Heart left ventricle (tissue), 16 donors: ENCODE measurements at regions of chr2 and their contacts with region 1.

Region 1: DNA sequence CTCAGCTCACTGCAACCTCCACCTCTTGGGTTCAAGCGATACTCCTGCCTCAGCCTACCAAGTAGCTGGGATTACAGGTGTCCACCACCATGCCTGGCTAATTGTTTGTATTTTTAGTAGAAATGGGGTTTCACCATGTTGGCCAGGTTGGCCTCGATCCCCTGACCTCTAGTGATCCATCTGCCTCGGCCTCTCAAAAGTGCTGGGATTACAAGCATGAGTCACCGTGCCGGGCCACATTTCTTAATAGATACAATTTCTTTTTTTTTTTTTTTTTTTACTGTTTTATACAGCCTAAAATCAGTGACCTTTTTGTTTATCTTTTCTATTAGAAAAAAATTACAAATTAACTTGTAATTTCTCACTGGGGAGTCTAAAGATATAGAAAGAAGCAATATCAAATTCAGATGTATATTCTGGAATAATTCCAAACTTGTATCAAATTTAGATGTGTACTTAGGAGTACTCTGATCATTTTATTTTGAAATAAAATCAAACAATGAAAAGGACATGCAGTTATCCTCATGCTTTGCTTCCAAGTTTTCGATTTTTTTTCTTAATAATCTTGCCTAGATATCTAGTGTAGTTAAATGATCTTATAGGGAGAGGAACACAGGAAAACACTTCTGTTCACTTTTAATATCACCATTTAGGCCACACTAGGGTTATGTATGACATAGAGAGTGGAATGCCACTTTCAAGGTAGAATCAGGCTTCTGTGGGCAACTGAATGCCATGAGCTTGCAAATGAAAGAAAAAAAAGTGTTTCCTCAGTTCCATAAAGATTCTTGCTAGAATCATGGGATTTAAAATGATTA is 1089.3 kb downstream of the SUCLG1 start:
- DNase-seq: no peak
- ATAC-seq: no peak
- H3K4me3 ChIP-seq: no peak overlapping the region
- H3K27ac ChIP-seq: no peak overlapping the region
- H3K4me1 ChIP-seq: no peaks in the 10 kb centered on the region
- H3K27me3 ChIP-seq: no peaks in the 10 kb centered on the region
- CTCF ChIP-seq: no peak
- POLR2A ChIP-seq: no peak

Region 2: DNA sequence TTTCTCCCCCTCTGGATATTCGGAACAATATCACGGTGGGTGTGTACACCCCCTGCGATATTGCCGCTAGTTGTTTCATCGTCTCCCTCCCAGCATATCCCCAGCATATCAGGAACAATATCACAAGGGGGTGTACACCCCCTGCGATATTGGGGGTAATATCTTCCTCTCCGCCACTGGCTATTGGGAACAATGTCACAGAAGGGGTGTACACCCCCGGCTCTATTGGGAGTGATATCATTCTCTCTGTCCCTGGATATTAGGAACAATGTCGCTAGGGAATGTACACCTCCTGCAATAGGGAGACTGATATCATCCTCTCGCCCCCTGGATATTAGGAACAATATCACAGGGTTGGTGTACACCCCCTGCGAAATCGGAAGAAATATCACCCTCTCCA is 842.7 kb before region 1 on chr2:
- intact Hi-C with region 1: no loop called
- DNase-seq: no peak
- ATAC-seq: no peak
- H3K4me3 ChIP-seq: no peak overlapping the region
- H3K27ac ChIP-seq: no peak overlapping the region
- H3K4me1 ChIP-seq: no peaks in the 10 kb centered on the region
- H3K27me3 ChIP-seq: no peaks in the 10 kb centered on the region
- CTCF ChIP-seq: no peak
- POLR2A ChIP-seq: no peak

Region 3: DNA sequence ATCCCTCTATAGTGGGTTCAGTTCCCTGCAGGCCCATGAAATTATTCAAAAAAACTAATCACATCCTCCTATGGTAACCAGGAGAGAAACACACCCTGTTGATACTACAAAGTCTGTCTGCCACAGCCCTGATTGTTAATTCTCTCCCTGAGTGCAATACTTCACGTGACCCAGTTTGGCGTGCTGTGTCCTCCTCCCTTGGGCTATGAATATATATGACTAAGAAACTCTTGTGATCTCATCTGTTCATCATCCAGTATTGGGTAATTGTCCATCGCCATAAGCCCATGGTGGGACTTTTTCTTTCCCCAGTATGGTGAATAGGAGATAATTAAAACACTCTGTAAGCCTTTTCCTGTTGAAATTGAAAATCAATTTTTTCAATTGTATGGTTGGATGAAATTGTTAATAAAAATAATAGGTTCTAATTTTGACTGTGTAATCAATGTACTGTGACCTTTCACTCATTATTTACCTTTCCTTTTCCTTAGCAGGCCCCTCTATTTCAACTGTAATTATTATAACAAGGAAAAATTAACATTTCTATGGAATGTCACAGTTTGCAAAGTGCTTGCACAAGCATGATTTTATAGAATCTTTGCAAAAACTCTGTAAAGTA is 733.3 kb before region 1 on chr2:
- intact Hi-C with region 1: loop called in 1 of 10 experiments (anchors 10 kb)
- DNase-seq: no peak
- ATAC-seq: no peak
- H3K4me3 ChIP-seq: no peak overlapping the region
- H3K27ac ChIP-seq: no peak overlapping the region
- H3K4me1 ChIP-seq: no peaks in the 10 kb centered on the region
- H3K27me3 ChIP-seq: no peaks in the 10 kb centered on the region
- CTCF ChIP-seq: no peak
- POLR2A ChIP-seq: no peak

Region 4: GRCh38 chr2:83386549-83386948 is 16.7 kb after region 1 on chr2:
- intact Hi-C with region 1: no loop called
- DNase-seq: no peak
- ATAC-seq: no peak
- H3K4me3 ChIP-seq: no peak overlapping the region
- H3K27ac ChIP-seq: no peak overlapping the region
- H3K4me1 ChIP-seq: no peaks in the 10 kb centered on the region
- H3K27me3 ChIP-seq: no peaks in the 10 kb centered on the region
- CTCF ChIP-seq: no peak
- POLR2A ChIP-seq: no peak